BJ (cell line): ENCODE measurements at regions of chr11 and their contacts with region 1.

Region 1: GRCh38 chr11:61378713-61379313 is 13.6 kb upstream of the TMEM216 start:
- DNase-seq: peak; percentile 96
- H3K4me3 ChIP-seq: no peak overlapping the region
- H3K27me3 ChIP-seq: no peaks in the 10 kb centered on the region
- CTCF ChIP-seq: no peak

Region 2: DNA sequence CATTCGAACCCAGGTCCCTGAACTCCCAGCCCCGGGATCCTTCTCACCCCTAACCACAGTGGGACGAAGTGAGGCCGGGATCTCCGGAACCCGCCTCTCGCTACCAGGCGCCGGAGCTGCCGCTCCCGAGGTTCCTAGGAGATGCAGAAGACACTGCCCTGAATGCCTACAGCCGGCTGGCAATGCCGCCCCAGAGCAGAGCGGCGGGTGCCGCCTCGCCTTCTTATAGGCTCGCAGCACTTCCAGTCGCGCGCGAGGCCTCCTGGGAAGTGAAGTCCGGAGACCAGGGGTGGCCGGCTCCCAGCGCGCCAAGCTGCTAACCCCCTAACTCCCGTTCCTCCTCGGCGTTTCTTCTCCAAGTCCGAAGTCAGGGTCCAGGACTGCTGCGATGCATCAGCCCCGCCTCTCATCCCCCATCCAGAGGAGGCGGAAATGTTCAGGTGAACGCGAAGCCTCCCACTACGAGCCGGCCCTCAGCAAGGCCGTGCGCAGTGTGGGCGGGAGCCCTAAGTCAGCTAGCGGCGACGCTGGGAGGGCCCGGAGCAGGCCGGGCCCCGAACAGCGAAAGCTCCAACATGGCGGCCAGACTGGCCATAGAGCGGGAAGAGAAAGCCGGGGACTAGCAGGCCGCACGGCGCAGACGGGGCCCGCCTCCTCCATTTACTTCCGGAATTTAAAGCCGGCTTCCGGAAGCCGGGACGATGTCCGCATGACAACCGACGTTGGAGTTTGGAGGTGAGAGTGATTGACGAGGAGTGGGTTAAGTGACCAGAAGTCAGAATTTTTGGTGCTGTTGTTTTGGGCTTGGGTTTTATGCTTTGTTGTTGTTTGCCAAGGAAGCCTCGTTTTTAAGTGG is 16.9 kb before region 1 on chr11 and contains the starts of genes CYB561A3 and TMEM138:
- CTCF ChIA-PET with region 1: interaction called, 3 read pairs
- POLR2A ChIA-PET with region 1: interaction called, 10 read pairs
- DNase-seq: peak; percentile 73
- H3K4me3 ChIP-seq: peak within 1 kb of the TSS; percentile 77
- H3K27me3 ChIP-seq: no peaks in the 10 kb centered on the region
- CTCF ChIP-seq: no peak
- polyA plus RNA-seq, gene CYB561A3: 32.9 and 91.3 TPM in 2 replicates
- polyA plus RNA-seq, gene TMEM138: 55.6 and 73.9 TPM in 2 replicates